CD14-positive monocyte (primary cell): ENCODE measurements at regions of chr1 and their contacts with region 1.

Region 1: GRCh38 chr1:181088079-181089016 is at the start of gene IER5:
- DNase-seq: peak; percentile 97 to 99 (median 98)
- H3K4me3 ChIP-seq: peak within 1 kb of the TSS; percentile 76 to 93 (median 91)
- H3K4me3 Mint-ChIP-seq: peak within 1 kb of the TSS; percentile 100
- H3K27ac ChIP-seq: peak within 1 kb of the TSS; percentile 92
- H3K27ac Mint-ChIP-seq: peak within 1 kb of the TSS; percentile 97 to 99 (median 98)
- H3K4me1 ChIP-seq: peaks cover 54 to 68% of the 10 kb centered on the region in 2 donors
- H3K4me1 Mint-ChIP-seq: peaks cover 61% of the 10 kb centered on the region
- H3K27me3 ChIP-seq: no peaks in the 10 kb centered on the region
- H3K27me3 Mint-ChIP-seq: no peaks in the 10 kb centered on the region
- CTCF ChIP-seq: no peak
- polyA plus RNA-seq, gene IER5: 13.7 to 110 (median 29.0) TPM

Region 2: GRCh38 chr1:181021811-181022434 is 66.4 kb before region 1 on chr1:
- intact Hi-C with region 1: loop called in 1 of 2 experiments (anchors 5 kb)
- DNase-seq: peak in 2 of 3 donors; percentile 59 to 80
- H3K4me3 ChIP-seq: peak overlapping the region; percentile 57 to 98 (median 93)
- H3K4me3 Mint-ChIP-seq: peak overlapping the region; percentile 97
- H3K27ac ChIP-seq: peak overlapping the region; percentile 83 to 96
- H3K27ac Mint-ChIP-seq: peak overlapping the region; percentile 94 to 98 (median 97)
- H3K4me1 ChIP-seq: peaks cover 30 to 35% of the 10 kb centered on the region in 2 donors
- H3K4me1 Mint-ChIP-seq: peaks cover 30% of the 10 kb centered on the region
- H3K27me3 ChIP-seq: no peaks in the 10 kb centered on the region
- H3K27me3 Mint-ChIP-seq: peaks cover 2 to 10% (median 3%) of the 10 kb centered on the region in 3 donors
- CTCF ChIP-seq: no peak

Region 3: DNA sequence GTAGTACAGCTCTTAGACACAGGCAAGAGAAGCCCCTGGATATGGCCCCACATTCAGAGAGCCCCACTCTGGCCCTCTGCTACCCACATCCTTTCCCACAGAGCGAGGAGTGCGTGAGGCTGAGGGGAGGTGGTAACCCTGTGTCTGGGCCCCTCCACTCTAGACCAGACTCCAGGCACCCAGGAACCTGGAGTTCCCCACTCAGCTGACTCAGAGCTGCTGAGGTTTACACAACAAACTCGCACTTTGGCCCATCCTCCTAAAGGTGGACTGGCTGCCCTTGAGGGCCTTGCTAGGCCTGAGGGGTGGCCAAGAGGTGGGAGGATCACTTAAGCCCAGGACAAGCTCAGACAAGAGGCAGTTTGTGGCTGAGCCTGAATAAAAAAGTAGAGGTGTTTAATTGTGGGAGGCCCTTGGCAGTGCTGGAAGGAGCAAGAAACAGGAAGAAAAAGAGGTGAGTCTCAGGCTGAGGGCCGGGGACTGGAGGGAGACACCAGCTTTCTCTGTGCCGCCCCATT is 43.8 kb before region 1 on chr1:
- intact Hi-C with region 1: loop called (anchors 5 to 10 kb)
- DNase-seq: peak; percentile 93 to 96 (median 95)
- H3K4me3 ChIP-seq: peak overlapping the region in 1 of 3 experiments; percentile 3
- H3K4me3 Mint-ChIP-seq: peak overlapping the region; percentile 61 to 72
- H3K27ac ChIP-seq: peak overlapping the region; percentile 80 to 96
- H3K27ac Mint-ChIP-seq: peak overlapping the region; percentile 95 to 98 (median 96)
- H3K4me1 ChIP-seq: peaks cover 55 to 63% of the 10 kb centered on the region in 2 donors
- H3K4me1 Mint-ChIP-seq: peaks cover 53% of the 10 kb centered on the region
- H3K27me3 ChIP-seq: no peaks in the 10 kb centered on the region
- H3K27me3 Mint-ChIP-seq: peaks cover 0 to 1% (median 0%) of the 10 kb centered on the region in 3 donors
- CTCF ChIP-seq: no peak

Region 4: GRCh38 chr1:181105134-181106021 is 17.0 kb after region 1 on chr1:
- intact Hi-C with region 1: loop called (anchors 2 kb)
- DNase-seq: peak; percentile 88 to 93 (median 90)
- H3K4me3 ChIP-seq: peak overlapping the region; percentile 69 to 82 (median 70)
- H3K4me3 Mint-ChIP-seq: peak overlapping the region; percentile 84 to 92
- H3K27ac ChIP-seq: peak overlapping the region; percentile 62 to 87
- H3K27ac Mint-ChIP-seq: peak overlapping the region; percentile 80 to 90 (median 89)
- H3K4me1 ChIP-seq: peaks cover 46 to 60% of the 10 kb centered on the region in 2 donors
- H3K4me1 Mint-ChIP-seq: peaks cover 61% of the 10 kb centered on the region
- H3K27me3 ChIP-seq: peaks cover 0 to 11% of the 10 kb centered on the region in 2 donors
- H3K27me3 Mint-ChIP-seq: peaks cover 22 to 31% (median 23%) of the 10 kb centered on the region in 3 donors
- CTCF ChIP-seq: no peak

Region 5: GRCh38 chr1:181134543-181135362 is 46.4 kb after region 1 on chr1:
- intact Hi-C with region 1: loop called (anchors 2 kb)
- DNase-seq: peak; percentile 84 to 94 (median 90)
- H3K4me3 ChIP-seq: peak overlapping the region in 2 of 3 experiments; percentile 28 to 58
- H3K4me3 Mint-ChIP-seq: peak overlapping the region; percentile 83 to 87
- H3K27ac ChIP-seq: peak overlapping the region; percentile 95 to 98
- H3K27ac Mint-ChIP-seq: peak overlapping the region; percentile 98 to 100 (median 99)
- H3K4me1 ChIP-seq: peaks cover 82 to 94% of the 10 kb centered on the region in 2 donors
- H3K4me1 Mint-ChIP-seq: peaks cover 92% of the 10 kb centered on the region
- H3K27me3 ChIP-seq: no peaks in the 10 kb centered on the region
- H3K27me3 Mint-ChIP-seq: peaks cover 0 to 6% (median 4%) of the 10 kb centered on the region in 3 donors
- CTCF ChIP-seq: no peak

Region 6: GRCh38 chr1:181219938-181220337 is 131.6 kb after region 1 on chr1:
- intact Hi-C with region 1: no loop called
- DNase-seq: no peak
- H3K4me3 ChIP-seq: no peak overlapping the region
- H3K4me3 Mint-ChIP-seq: no peak overlapping the region
- H3K27ac ChIP-seq: no peak overlapping the region
- H3K27ac Mint-ChIP-seq: peak overlapping the region in 1 of 7 donors; percentile 60
- H3K4me1 ChIP-seq: no peaks in the 10 kb centered on the region
- H3K4me1 Mint-ChIP-seq: no peaks in the 10 kb centered on the region
- H3K27me3 ChIP-seq: no peaks in the 10 kb centered on the region
- H3K27me3 Mint-ChIP-seq: peaks cover 6 to 13% (median 6%) of the 10 kb centered on the region in 3 donors
- CTCF ChIP-seq: no peak